Sigmoid colon (tissue), 7 donors: ENCODE measurements at regions of chr6 and their contacts with region 1.

Region 1: DNA sequence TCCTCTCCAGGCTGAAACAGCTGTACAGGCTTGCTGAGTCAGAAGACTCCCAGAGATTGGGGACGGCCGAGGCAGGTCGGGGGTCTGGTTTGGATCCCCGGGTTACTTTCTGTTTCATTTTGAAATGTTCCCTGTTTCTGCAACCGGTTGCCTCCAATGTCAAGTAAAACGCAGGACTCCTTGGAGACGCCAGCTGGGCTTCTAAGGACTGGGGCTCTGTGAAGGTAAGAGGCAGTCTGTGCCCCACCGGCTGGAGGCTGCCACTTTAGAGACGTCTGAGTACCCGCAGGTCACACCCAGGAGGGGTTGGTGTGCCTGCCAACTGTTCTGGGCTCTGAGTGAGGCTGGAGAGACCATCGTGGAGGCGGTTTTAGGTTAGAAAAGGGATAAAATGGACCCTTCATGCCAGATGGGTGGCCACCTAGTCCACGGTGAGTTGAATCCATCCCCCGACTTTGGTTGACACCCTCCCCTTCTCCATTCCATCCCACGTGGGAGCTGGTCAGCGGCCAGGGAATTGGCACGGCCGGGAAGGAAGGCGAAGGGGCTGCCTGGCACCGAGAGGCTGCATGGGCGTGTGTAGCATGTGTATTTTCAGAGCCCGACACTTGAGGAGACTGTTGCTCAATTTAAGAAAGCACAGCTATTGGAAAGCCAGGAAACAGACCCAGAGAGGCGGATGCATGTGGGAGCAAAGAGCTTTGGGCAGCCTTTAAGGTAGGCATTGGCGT is 240.9 kb downstream of the PHACTR1 start:
- DNase-seq: peak; percentile 73
- H3K4me3 ChIP-seq: peak overlapping the region; percentile 54 to 64 (median 60)
- H3K27ac ChIP-seq: peak overlapping the region; percentile 60 to 73 (median 66)
- H3K4me1 ChIP-seq: peaks cover 0 to 12% (median 6%) of the 10 kb centered on the region in 4 donors
- H3K27me3 ChIP-seq: peaks cover 0 to 5% (median 0%) of the 10 kb centered on the region in 3 donors
- CTCF ChIP-seq: no peak
- EP300 ChIP-seq: no peak
- POLR2A ChIP-seq: no peak

Region 2: DNA sequence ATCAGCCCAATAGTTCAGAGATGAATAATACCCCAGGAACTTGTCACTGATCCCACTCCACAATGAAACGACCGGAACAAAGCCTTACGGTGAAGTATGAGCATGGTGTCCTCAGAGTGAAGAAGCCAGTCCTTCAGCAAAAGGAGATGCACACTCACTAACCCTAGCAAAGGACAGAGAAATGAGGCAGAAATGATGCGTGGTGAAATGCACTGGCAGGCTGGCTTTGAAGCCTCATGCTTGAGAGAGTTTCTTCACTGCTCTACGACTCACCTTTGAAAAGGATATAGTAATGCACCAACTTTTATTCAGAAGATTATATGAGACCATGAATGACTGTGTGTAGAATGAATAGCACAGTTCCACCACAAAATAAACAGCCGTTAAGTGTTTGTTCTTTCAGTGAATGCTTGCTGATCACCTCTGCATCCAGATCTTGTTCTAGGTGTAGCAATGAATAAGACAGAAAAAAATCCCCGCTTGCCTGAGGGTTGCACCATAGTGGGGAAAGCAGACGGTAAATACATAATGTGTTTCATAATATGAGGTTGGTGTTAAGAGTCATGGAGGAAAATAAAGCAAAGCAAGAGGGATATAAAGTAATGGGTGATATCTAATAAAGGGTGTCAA is 166.0 kb before region 1 on chr6:
- intact Hi-C with region 1: no loop called
- DNase-seq: no peak
- H3K4me3 ChIP-seq: no peak overlapping the region
- H3K27ac ChIP-seq: no peak overlapping the region
- H3K4me1 ChIP-seq: no peaks in the 10 kb centered on the region
- H3K27me3 ChIP-seq: no peaks in the 10 kb centered on the region
- CTCF ChIP-seq: no peak
- EP300 ChIP-seq: no peak
- POLR2A ChIP-seq: no peak

Region 3: DNA sequence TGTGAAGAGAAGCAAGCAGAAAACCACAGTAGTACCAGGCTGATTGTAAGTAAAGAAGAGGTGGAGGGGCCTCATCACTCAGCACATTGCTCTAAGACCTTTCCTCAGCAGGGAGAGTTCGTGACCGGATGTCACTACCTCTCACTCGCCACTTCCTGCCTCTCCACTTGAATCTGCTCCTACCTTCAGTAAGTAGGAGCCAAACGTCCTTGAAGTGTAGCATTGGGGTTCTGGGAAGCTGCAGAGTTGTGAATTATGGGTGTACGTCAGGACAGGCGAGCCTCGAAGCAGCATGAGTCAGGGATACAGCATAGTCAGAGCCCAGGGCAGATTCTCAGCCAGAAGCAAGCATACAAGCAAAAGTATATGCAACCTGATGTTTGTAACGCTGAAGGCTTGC is 16.1 kb before region 1 on chr6:
- intact Hi-C with region 1: no loop called
- DNase-seq: no peak
- H3K4me3 ChIP-seq: no peak overlapping the region
- H3K27ac ChIP-seq: no peak overlapping the region
- H3K4me1 ChIP-seq: no peaks in the 10 kb centered on the region
- H3K27me3 ChIP-seq: no peaks in the 10 kb centered on the region
- CTCF ChIP-seq: no peak
- EP300 ChIP-seq: no peak
- POLR2A ChIP-seq: no peak

Region 4: DNA sequence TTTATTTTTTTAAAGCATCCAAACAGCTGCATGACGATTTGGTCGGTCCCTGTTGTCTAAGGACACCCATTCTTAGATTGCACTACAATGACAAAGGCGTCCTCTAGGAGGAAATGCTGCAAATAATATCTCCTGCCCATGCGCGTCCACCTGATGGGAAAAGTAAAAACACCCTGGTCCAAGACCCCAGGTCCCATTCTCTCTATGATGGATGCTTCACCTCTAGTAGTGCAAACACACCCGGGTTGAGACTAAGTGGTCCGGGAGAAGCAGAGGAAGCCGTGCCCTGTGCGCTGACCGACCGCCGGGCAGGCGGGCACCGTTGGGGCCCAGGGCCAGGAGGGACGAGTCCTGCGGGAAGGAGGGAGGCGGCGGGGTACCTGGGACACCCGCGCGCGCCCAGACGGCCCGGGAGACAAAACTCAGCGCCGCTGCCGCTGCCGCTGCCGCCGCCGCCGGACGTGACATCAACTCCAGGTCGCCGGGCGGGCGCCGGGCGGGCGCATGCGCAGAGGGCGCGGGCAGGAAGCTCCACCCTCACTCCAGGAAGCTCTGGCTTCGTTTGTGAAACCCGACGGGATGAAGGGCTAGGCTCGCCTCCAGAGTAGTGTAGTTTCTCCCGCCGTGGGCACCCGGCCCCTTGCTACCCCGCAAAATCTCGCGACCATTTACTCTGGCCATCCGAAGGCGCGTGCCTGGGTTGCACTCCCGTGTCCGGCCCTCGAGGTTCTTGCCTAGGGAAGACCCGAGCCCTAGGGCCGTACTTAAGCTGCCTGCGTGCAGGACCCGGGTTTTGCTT is 370.8 kb after region 1 on chr6 and contains the start of gene TBC1D7:
- intact Hi-C with region 1: loop called (anchors 2 kb)
- DNase-seq: peak; percentile 97
- H3K4me3 ChIP-seq: peak within 1 kb of the TSS; percentile 57 to 89 (median 80)
- H3K27ac ChIP-seq: peak within 1 kb of the TSS; percentile 83 to 94 (median 94)
- H3K4me1 ChIP-seq: peaks cover 0 to 16% (median 7%) of the 10 kb centered on the region in 4 donors
- H3K27me3 ChIP-seq: no peaks in the 10 kb centered on the region
- CTCF ChIP-seq: peak in 2 of 4 experiments; percentile 19 to 25
- EP300 ChIP-seq: no peak
- POLR2A ChIP-seq: peak; percentile 59 to 74
- total RNA-seq, gene TBC1D7: 7.2 to 13.8 (median 11.2) TPM